ENCODE measurements at regions of chr12 and their contacts with region 1.

Region 1: GRCh38 chr12:111451649-111452129 is 46.0 kb downstream of the SH2B3 start:
- DNase-seq: peak in 2 of 35 experiments; percentile 58 to 78
- ATAC-seq: peak in 3 of 4 experiments; percentile 38 to 66 (median 64)
- H3K4me3 ChIP-seq: no peak overlapping the region
- H3K4me3 Mint-ChIP-seq: no peak overlapping the region
- H3K27ac ChIP-seq: peak overlapping the region; percentile 21
- H3K27ac Mint-ChIP-seq: peak overlapping the region; percentile 25 to 67
- H3K4me1 ChIP-seq: peaks cover 5 to 12% of the 10 kb centered on the region in 2 experiments
- H3K4me1 Mint-ChIP-seq: peaks cover 20 to 59% (median 42%) of the 10 kb centered on the region in 3 donors
- H3K27me3 ChIP-seq: no peaks in the 10 kb centered on the region
- H3K27me3 Mint-ChIP-seq: no peaks in the 10 kb centered on the region

Region 2: GRCh38 chr12:111396726-111397445 is 54.8 kb before region 1 on chr12:
- CTCF ChIA-PET with region 1: interaction called, 138 to 218 read pairs
- POLR2A ChIA-PET with region 1: interaction called, 4 to 7 read pairs
- DNase-seq: peak; percentile 62 to 93 (median 83)
- ATAC-seq: peak; percentile 92 to 98 (median 94)
- H3K4me3 ChIP-seq: peak overlapping the region in 1 of 2 donors; percentile 26
- H3K4me3 Mint-ChIP-seq: peak overlapping the region; percentile 44 to 66 (median 65)
- H3K27ac ChIP-seq: no peak overlapping the region
- H3K27ac Mint-ChIP-seq: peak overlapping the region in 1 of 2 donors; percentile 52
- H3K4me1 ChIP-seq: peaks cover 0 to 9% of the 10 kb centered on the region in 2 experiments
- H3K4me1 Mint-ChIP-seq: peaks cover 7 to 17% (median 13%) of the 10 kb centered on the region in 3 donors
- H3K27me3 ChIP-seq: peaks cover 0 to 3% of the 10 kb centered on the region in 2 experiments
- H3K27me3 Mint-ChIP-seq: no peaks in the 10 kb centered on the region

Region 3: DNA sequence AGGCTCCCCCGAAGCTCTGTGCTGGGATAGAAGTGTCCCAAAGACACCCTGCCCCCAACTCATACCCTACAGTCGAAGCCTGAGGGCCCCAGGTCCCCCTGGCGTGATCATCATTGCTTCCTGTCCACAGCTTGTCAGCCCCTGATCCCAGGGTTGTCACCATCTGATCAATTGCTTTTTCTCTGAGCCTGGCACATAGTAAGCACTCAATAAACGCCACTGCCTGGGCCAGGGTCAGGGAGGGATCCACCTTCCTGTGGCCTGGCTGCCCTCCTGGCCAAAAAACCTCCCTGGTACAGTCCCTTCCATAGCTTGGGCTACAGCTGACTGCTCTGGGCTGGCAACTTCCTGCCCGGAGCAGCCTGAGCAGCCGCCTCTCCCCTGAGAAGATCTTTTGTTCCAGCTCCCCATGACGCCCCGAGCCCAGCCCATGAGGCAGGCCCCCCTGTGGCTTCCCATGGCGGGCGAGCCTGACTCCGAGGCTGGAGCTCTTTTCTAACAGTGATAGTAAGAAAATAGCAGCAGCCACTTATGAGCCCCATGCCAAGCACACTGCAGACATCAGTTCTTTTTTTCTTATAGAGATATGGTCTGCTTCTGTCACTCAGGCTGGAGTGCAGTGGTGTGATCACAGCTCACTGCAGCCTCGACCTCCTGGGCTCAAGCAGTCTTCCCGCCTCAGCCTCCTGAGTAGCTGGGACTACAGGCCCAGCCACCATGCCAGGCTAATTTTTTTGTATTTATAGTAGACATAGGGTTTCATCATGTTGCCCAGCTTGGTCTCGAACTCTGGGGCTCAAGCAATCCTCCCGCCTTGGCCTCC is 39.5 kb before region 1 on chr12:
- CTCF ChIA-PET with region 1: interaction called, 5 to 91 read pairs
- POLR2A ChIA-PET with region 1: interaction called in 1 of 2 experiments, 6 read pairs
- DNase-seq: peak in 5 of 35 experiments; percentile 9 to 41 (median 26)
- ATAC-seq: peak; percentile 53 to 66 (median 56)
- H3K4me3 ChIP-seq: no peak overlapping the region
- H3K4me3 Mint-ChIP-seq: peak overlapping the region in 2 of 3 donors; percentile 68 to 85
- H3K27ac ChIP-seq: peak overlapping the region; percentile 88
- H3K27ac Mint-ChIP-seq: peak overlapping the region; percentile 95 to 96
- H3K4me1 ChIP-seq: peaks cover 49 to 84% of the 10 kb centered on the region in 2 experiments
- H3K4me1 Mint-ChIP-seq: peaks cover 76 to 89% (median 87%) of the 10 kb centered on the region in 3 donors
- H3K27me3 ChIP-seq: no peaks in the 10 kb centered on the region
- H3K27me3 Mint-ChIP-seq: no peaks in the 10 kb centered on the region

Region 4: DNA sequence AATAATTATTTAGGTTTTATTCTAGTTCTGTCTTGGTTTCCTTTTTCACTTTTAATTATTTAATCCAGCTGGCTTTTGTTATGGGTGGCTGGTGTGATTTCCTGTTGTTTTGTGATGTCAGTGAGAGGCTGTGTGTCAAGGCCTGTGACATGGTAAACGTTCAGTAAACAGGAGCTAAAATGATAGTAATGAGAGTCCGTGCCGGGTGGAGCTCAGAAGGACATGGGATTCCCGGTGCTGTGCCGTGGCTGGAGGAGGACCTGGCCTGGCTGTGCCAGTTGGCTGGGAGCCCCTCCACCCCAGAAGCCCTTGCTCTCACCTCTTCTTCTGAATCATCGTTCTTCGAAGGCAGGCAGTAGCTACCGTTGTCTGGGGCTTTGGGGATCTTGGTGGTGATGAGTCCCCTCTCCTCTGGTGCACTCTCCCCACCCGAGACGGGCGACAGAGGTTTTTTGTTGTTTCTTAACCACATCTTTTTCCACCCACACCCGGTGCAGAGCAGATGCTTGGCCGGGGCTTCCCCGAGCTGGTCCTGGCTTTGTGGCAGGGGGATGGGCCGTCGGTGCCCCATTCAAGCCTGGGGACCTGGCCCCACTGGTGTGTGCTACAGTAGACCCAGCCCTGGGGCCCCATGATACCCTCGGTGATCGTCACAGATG is 16.9 kb before region 1 on chr12:
- CTCF ChIA-PET with region 1: interaction called, 3 to 45 read pairs
- POLR2A ChIA-PET with region 1: interaction called, 4 to 10 read pairs
- DNase-seq: peak; percentile 59 to 92 (median 88)
- ATAC-seq: peak; percentile 79 to 81 (median 80)
- H3K4me3 ChIP-seq: peak overlapping the region; percentile 42 to 49
- H3K4me3 Mint-ChIP-seq: peak overlapping the region; percentile 79 to 90 (median 82)
- H3K27ac ChIP-seq: peak overlapping the region; percentile 100
- H3K27ac Mint-ChIP-seq: peak overlapping the region; percentile 96 to 99
- H3K4me1 ChIP-seq: peaks cover 60 to 99% of the 10 kb centered on the region in 2 experiments
- H3K4me1 Mint-ChIP-seq: peaks cover 91 to 97% (median 95%) of the 10 kb centered on the region in 3 donors
- H3K27me3 ChIP-seq: no peaks in the 10 kb centered on the region
- H3K27me3 Mint-ChIP-seq: no peaks in the 10 kb centered on the region

Region 5: DNA sequence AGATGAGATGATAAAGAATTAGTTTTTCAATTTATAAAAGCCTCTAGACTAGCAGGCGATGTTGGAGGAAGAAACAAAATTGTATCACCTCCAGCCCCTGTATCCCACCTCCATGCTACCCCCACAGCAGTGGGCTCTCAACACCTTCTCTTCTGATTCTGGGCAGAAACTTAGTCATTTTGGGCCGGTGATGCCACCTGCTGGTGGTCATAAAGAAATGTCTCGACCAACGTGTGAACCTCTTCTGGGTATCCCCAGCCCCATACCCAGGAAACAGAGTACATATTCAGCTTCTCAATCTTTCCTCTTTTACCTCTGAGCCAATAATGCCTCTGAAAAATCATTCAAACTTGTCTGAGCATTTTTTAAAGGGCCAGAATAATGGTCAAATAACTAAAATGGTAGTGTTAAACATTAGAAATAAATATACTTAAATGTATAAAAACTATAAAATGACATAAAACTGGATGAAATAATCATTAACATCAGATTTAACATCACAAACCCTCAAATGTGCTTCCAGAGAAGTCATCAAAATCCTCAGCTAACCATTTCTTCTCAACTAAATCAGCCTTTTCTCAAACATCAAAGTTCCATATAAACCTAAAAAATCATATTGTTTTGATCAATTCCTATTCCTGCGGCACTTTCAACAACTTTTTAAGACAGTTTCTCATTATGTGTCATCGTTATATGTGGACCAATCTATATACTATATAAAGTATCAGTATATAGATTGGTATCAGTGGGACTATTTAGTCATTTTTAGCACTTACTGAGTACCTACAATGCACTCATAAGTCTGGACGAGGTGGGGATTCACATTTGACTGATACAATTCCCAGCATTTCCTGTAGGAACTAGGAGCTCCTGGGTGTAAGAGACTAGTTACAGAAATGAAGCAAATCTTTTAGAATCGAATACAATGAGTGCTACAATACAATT is 78.0 kb after region 1 on chr12:
- CTCF ChIA-PET with region 1: interaction called, 3 to 16 read pairs
- POLR2A ChIA-PET with region 1: no interaction called
- DNase-seq: peak in 34 of 35 experiments; percentile 27 to 80 (median 50)
- ATAC-seq: peak; percentile 67 to 82 (median 72)
- H3K4me3 ChIP-seq: no peak overlapping the region
- H3K4me3 Mint-ChIP-seq: no peak overlapping the region
- H3K27ac ChIP-seq: no peak overlapping the region
- H3K27ac Mint-ChIP-seq: no peak overlapping the region
- H3K4me1 ChIP-seq: no peaks in the 10 kb centered on the region
- H3K4me1 Mint-ChIP-seq: peaks cover 3 to 6% (median 4%) of the 10 kb centered on the region in 3 donors
- H3K27me3 ChIP-seq: no peaks in the 10 kb centered on the region
- H3K27me3 Mint-ChIP-seq: no peaks in the 10 kb centered on the region

Region 6: DNA sequence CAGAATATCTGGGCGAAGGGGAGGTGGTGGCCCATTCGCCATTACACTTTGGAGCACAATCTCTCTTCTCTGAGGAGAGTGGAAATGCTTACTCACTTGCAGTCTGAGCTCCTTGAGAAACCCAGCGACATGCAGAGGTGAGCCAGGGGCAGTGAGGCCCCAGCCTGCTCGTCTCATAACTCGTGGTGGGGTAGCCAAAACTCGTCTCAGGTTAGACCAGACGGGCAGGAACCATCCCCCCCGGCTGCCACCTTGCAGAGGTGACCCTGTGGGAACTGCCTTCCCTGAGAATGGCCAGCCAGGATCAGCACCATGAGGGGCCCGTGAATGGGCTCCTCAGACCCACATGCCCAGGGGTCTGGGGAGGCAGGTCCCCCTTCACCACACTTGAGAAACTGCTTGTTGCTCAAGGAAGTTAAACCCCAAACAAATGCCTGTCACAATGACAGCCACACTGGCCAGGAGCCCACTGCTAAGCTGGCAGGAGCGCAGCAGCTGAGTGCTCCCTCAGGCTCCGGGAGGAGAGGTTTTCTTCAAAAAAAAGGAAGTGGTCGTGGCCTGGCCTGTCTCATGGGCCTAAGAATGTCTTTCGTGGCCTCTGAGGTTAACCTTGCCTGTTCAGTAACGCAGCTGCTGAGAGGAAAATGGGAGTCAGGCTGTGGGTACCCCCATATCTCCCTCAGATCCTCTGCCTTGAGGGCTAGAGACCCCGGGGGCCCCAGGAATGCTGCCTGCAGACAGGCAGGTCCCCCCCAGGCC is 305.9 kb after region 1 on chr12:
- CTCF ChIA-PET with region 1: no interaction called
- POLR2A ChIA-PET with region 1: no interaction called
- DNase-seq: peak in 1 of 35 experiments; percentile 21
- ATAC-seq: no peak
- H3K4me3 ChIP-seq: no peak overlapping the region
- H3K4me3 Mint-ChIP-seq: no peak overlapping the region
- H3K27ac ChIP-seq: no peak overlapping the region
- H3K27ac Mint-ChIP-seq: no peak overlapping the region
- H3K4me1 ChIP-seq: peaks cover 0 to 9% of the 10 kb centered on the region in 2 experiments
- H3K4me1 Mint-ChIP-seq: peaks cover 0 to 12% (median 3%) of the 10 kb centered on the region in 3 donors
- H3K27me3 ChIP-seq: peaks cover 0 to 2% of the 10 kb centered on the region in 2 experiments
- H3K27me3 Mint-ChIP-seq: peaks cover 5 to 8% of the 10 kb centered on the region in 2 donors

Measured in T-cell (primary cell).